Right ventricle myocardium inferior (tissue), 1 donor: ENCODE measurements at regions of chr13 and their contacts with region 1.

Region 1: DNA sequence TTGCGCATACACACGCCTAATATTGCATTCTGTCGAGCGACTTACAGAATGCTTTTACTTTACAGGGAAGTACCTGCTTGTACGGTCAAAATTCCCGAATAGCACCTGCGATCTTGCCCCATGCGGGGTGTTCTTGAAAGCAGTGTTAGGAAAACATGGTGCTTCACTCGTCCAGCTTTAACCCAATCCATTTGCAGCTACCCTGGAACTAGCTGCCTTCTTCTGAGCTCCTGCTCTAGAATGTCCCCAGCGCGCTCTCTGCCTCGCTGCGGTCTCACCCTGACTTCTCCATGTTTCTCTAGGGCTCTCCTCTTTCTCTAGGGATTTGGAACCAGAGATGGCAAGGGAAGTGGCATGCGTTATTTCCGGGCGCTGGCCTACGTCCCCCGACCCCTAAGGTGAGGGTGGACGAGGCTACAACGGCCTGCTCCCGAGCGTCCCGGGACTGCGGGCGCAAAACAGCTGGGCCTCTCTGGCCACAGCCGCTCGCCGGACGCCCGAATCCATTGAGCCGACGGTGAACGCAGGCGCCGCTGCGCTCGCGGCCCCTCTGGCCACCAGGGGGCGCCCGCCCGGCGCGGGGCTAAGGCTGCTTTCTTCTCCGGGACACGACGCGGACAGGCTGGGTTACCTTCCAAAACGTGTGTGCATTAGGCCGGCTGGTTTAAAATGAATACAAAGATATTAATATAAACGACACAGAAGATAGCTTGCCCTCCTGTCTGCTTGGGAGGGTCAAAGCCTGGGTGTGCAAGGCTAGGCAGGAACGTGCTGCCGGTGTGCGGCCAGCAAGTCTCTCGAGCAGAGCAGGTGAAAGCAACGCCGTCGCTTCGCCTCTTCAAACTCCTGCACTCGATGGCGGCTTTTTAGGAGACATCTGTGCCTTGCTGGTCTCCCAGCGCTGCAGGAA is 1.8 kb upstream of the SPRY2 start:
- DNase-seq: peak; percentile 95
- ATAC-seq: peak; percentile 44

Region 2: GRCh38 chr13:79637133-79637763 is 705.5 kb before region 1 on chr13:
- intact Hi-C with region 1: loop called (anchors 2 kb)
- DNase-seq: peak; percentile 86
- ATAC-seq: peak; percentile 97

Region 3: DNA sequence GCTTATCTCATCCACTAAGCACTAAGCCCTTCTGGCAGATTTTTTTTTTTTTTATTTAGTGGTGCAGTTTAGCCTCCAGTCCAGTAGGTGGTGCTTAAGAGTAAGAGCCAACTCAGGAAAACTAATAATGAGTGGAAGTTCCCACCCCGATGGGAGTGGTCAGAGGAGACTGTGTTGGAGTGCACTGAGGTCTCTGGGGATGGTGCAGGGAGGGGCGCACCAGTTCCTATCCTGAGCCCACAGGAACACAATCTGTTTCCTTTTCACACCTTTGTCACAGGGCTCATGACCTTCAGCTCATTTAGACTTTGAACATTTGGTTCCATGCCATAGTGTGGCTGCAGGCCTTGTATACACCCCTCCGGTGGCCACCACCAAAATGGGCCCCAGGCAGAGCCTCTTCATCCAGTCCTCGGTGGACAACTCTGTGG is 369.2 kb before region 1 on chr13:
- intact Hi-C with region 1: loop called (anchors 1 kb)
- DNase-seq: peak; percentile 51
- ATAC-seq: peak; percentile 63

Region 4: DNA sequence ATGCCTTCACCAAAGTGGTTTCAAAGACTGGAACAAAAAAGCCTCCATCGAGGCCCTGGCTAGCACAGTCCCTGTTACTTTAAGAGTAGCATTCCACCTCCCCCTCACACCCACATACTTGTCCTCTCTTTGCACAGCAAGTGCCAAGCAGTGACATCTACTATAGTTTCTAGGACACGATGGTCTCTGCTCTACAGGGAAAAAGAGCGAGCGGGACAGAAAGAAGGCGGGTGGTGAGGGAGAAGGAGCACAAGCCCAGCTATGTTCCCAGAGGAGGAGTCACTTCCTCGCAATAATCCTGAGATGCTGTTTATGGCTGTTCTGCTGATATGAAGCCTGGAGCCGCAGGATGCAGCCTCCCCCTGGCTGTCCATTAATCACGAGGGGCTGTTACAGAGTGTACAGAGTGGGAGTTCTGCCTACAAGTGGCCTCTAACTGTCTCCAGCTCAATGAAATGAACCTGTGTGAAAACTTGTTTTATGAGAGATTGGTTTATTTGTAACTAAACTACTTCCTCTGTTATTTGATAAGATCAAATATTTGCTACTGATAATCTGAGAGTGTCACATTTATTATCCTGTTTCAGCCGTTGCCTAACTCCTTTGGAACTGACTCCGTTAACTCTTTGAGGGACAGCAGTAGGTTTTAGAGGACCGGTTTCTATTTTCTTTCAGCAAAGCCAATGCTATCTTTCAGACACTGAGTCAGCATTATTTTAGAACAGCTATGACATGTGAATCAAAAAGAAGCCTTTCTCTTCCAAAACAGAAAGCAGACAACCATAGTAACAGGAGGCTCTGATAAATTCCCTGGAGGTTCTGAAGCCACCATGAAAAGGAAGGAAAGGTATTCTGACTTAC is 209.8 kb before region 1 on chr13:
- intact Hi-C with region 1: loop called (anchors 2 kb)
- DNase-seq: peak; percentile 72
- ATAC-seq: peak; percentile 97

Region 5: DNA sequence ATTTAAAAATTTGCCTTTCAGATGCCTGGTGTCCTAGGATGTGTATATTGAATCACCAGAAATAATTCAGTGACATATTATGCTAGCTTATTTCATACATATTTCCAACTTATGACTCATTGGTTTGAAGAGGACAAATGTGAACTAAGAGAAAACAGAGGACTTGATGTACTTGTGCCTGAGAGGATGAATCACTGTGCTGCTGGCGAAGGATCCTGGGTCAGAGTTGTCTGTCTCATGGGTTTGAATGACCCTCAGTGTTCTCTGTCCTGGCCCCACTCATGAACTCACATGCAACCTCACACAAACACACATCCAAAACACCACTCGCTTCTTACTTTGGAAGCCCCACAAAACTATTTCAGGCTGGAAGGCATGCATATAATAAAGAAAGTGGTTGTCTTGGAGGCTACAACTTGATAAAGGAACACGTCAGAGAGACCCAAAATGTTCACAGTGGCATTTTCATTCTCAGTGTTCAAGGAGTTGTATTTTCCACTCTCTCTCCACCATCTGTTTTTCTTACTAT is 127.2 kb after region 1 on chr13:
- intact Hi-C with region 1: loop called (anchors 5 kb)
- DNase-seq: peak; percentile 82
- ATAC-seq: peak; percentile 99

Region 6: GRCh38 chr13:80586356-80586755 is 243.6 kb after region 1 on chr13:
- intact Hi-C with region 1: no loop called
- DNase-seq: no peak
- ATAC-seq: no peak